Mammary epithelial cell (primary cell): ENCODE measurements at regions of chr1 and their contacts with region 1.

Region 1: GRCh38 chr1:67535474-67535873 is 105.3 kb upstream of the SERBP1 start:
- DNase-seq: peak; percentile 78
- H3K4me3 ChIP-seq: no peak overlapping the region
- H3K27ac ChIP-seq: peak overlapping the region; percentile 18
- H3K4me1 ChIP-seq: peaks cover 25% of the 10 kb centered on the region
- H3K27me3 ChIP-seq: no peaks in the 10 kb centered on the region
- CTCF ChIP-seq: peak; percentile 100

Region 2: DNA sequence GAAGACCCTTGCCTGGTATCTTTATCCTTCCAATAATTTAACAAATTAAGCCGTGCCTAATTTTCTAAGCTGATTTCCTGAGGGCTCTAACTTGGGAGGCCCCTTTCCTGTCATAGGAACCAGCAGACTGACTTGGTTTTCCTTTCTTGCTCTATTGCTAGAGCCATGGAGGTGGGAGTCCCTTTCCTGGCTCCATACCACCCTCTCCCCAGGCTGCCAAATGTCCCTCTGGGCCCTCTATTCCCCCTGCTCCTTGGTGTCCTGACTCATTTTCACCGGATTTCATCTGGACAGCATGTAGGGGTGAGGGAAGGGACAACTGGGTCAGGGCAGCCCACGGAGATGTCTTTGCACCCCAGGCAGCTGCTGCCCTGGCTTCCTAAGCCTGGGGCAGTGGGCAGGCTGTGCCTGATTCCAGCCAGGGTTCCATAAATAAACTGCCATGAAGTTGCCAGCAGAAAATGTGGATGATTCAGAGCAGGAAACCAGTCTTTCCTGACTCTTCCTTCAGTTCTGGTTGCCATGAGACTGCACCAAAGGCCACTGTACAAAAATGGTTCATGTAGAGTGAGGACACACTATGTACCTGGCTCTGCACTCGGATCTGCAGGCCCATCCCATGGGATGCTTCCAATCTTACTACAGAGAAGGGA is 67.3 kb before region 1 on chr1:
- CTCF ChIA-PET with region 1: no interaction called
- dilution Hi-C with region 1: no loop called
- in situ Hi-C with region 1: no loop called
- intact Hi-C with region 1: no loop called
- DNase-seq: peak; percentile 41
- H3K4me3 ChIP-seq: no peak overlapping the region
- H3K27ac ChIP-seq: no peak overlapping the region
- H3K4me1 ChIP-seq: peaks cover 7% of the 10 kb centered on the region
- H3K27me3 ChIP-seq: no peaks in the 10 kb centered on the region
- CTCF ChIP-seq: no peak

Region 3: GRCh38 chr1:67626495-67627235 is 91.2 kb after region 1 on chr1:
- CTCF ChIA-PET with region 1: no interaction called
- dilution Hi-C with region 1: loop called (anchors 5 kb)
- in situ Hi-C with region 1: no loop called
- intact Hi-C with region 1: no loop called
- DNase-seq: peak; percentile 100
- H3K4me3 ChIP-seq: no peak overlapping the region
- H3K27ac ChIP-seq: peak overlapping the region; percentile 97
- H3K4me1 ChIP-seq: peaks cover 55% of the 10 kb centered on the region
- H3K27me3 ChIP-seq: no peaks in the 10 kb centered on the region
- CTCF ChIP-seq: no peak

Region 4: DNA sequence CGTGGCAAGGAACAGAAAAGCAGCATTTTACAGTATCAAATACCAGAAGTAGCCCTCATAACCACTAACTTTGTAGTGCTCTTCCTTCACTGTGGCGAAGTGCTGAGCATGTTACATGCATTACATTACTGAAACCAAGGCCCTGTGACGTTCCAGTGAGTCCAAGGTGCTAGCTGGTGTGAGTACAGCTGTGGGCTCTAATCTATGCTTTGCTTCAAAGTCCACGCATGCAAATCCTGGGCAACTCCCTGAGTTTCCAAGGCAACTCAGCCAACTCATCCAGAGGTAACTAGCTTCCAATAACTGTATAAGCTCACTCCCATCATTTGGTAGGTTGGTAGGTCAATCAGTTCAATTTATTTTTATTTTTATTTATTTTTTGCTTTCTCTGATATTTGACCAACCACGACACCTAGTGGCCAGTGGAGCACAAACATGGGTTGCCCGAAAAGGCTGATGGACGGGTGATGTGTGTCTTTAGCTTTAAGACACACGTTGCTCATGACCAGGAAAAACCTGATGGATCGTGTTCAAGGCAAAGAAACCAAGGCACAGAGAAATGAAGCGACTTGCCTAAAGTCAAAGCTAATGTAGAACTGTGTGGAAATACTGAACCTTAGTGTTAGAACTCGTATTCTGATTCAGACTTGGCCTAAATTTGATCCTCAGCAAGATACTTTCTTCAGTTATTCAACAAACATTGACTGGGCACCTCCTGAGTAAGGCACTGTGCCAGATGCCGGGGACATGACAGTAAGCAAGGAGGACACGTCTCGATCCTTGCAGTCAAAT is 224.8 kb after region 1 on chr1:
- CTCF ChIA-PET with region 1: interaction called, 33 read pairs
- dilution Hi-C with region 1: loop called (anchors 5 kb)
- in situ Hi-C with region 1: loop called in 1 of 2 experiments (anchors 5 kb)
- intact Hi-C with region 1: loop called (anchors 1 kb)
- DNase-seq: peak; percentile 81
- H3K4me3 ChIP-seq: no peak overlapping the region
- H3K27ac ChIP-seq: peak overlapping the region; percentile 91
- H3K4me1 ChIP-seq: peaks cover 37% of the 10 kb centered on the region
- H3K27me3 ChIP-seq: no peaks in the 10 kb centered on the region
- CTCF ChIP-seq: peak; percentile 73 to 77

Region 5: GRCh38 chr1:68010090-68010489 is 474.6 kb after region 1 on chr1:
- CTCF ChIA-PET with region 1: no interaction called
- dilution Hi-C with region 1: loop called (anchors 25 kb)
- in situ Hi-C with region 1: no loop called
- intact Hi-C with region 1: loop called (anchors 2 kb)
- DNase-seq: peak; percentile 17
- H3K4me3 ChIP-seq: no peak overlapping the region
- H3K27ac ChIP-seq: no peak overlapping the region
- H3K4me1 ChIP-seq: no peaks in the 10 kb centered on the region
- H3K27me3 ChIP-seq: no peaks in the 10 kb centered on the region
- CTCF ChIP-seq: peak; percentile 36 to 54

Region 6: GRCh38 chr1:68120136-68120791 is 584.8 kb after region 1 on chr1:
- CTCF ChIA-PET with region 1: no interaction called
- dilution Hi-C with region 1: no loop called
- in situ Hi-C with region 1: loop called in 1 of 2 experiments (anchors 25 kb)
- intact Hi-C with region 1: no loop called
- DNase-seq: peak; percentile 64
- H3K4me3 ChIP-seq: no peak overlapping the region
- H3K27ac ChIP-seq: no peak overlapping the region
- H3K4me1 ChIP-seq: no peaks in the 10 kb centered on the region
- H3K27me3 ChIP-seq: no peaks in the 10 kb centered on the region
- CTCF ChIP-seq: peak; percentile 76 to 78